ENCODE measurements at regions of chr19 and their contacts with region 1.

Region 1: GRCh38 chr19:38849860-38850435 is at the start of gene HNRNPL:
- DNase-seq: peak in 6 of 9 experiments; percentile 98 to 100 (median 99)
- ATAC-seq: peak; percentile 68
- H3K4me3 ChIP-seq: peak within 1 kb of the TSS; percentile 70 to 72
- H3K4me3 Mint-ChIP-seq: peak within 1 kb of the TSS; percentile 97
- H3K27ac ChIP-seq: peak within 1 kb of the TSS; percentile 85 to 97
- H3K27ac Mint-ChIP-seq: peak within 1 kb of the TSS; percentile 99
- H3K4me1 ChIP-seq: peaks cover 54% of the 10 kb centered on the region
- H3K4me1 Mint-ChIP-seq: peaks cover 52% of the 10 kb centered on the region
- H3K27me3 ChIP-seq: no peaks in the 10 kb centered on the region
- H3K27me3 Mint-ChIP-seq: no peaks in the 10 kb centered on the region
- CTCF ChIP-seq: peak; percentile 21
- total RNA-seq, gene HNRNPL: 615 to 625 TPM

Region 2: GRCh38 chr19:38618590-38619360 is 231.2 kb before region 1 on chr19 and contains the start of gene EIF3K:
- CTCF ChIA-PET with region 1: no interaction called
- POLR2A ChIA-PET with region 1: interaction called, 4 read pairs
- intact Hi-C with region 1: loop called in 1 of 2 experiments (anchors 1 kb)
- DNase-seq: peak; percentile 86 to 100 (median 97)
- ATAC-seq: peak; percentile 68
- H3K4me3 ChIP-seq: peak within 1 kb of the TSS; percentile 84 to 85
- H3K4me3 Mint-ChIP-seq: peak within 1 kb of the TSS; percentile 99
- H3K27ac ChIP-seq: peak within 1 kb of the TSS; percentile 89 to 96
- H3K27ac Mint-ChIP-seq: peak within 1 kb of the TSS; percentile 98
- H3K4me1 ChIP-seq: peaks cover 38% of the 10 kb centered on the region
- H3K4me1 Mint-ChIP-seq: peaks cover 49% of the 10 kb centered on the region
- H3K27me3 ChIP-seq: no peaks in the 10 kb centered on the region
- H3K27me3 Mint-ChIP-seq: no peaks in the 10 kb centered on the region
- CTCF ChIP-seq: no peak
- total RNA-seq, gene EIF3K: 313 to 315 TPM

Region 3: GRCh38 chr19:38665950-38666662 is 183.8 kb before region 1 on chr19:
- CTCF ChIA-PET with region 1: no interaction called
- POLR2A ChIA-PET with region 1: no interaction called
- intact Hi-C with region 1: no loop called
- DNase-seq: no peak
- ATAC-seq: no peak
- H3K4me3 ChIP-seq: no peak overlapping the region
- H3K4me3 Mint-ChIP-seq: no peak overlapping the region
- H3K27ac ChIP-seq: peak overlapping the region in 1 of 2 experiments; percentile 77
- H3K27ac Mint-ChIP-seq: no peak overlapping the region
- H3K4me1 ChIP-seq: peaks cover 78% of the 10 kb centered on the region
- H3K4me1 Mint-ChIP-seq: peaks cover 71% of the 10 kb centered on the region
- H3K27me3 ChIP-seq: peaks cover 0 to 7% of the 10 kb centered on the region in 2 experiments
- H3K27me3 Mint-ChIP-seq: peaks cover 21% of the 10 kb centered on the region
- CTCF ChIP-seq: no peak

Region 4: GRCh38 chr19:38831142-38831605 is 18.8 kb before region 1 on chr19:
- CTCF ChIA-PET with region 1: interaction called, 4 read pairs
- POLR2A ChIA-PET with region 1: interaction called, 27 read pairs
- intact Hi-C with region 1: loop called (anchors 1 kb)
- DNase-seq: peak in 1 of 9 experiments; percentile 63
- ATAC-seq: no peak
- H3K4me3 ChIP-seq: peak overlapping the region; percentile 74
- H3K4me3 Mint-ChIP-seq: peak overlapping the region; percentile 90
- H3K27ac ChIP-seq: peak overlapping the region; percentile 66 to 85
- H3K27ac Mint-ChIP-seq: peak overlapping the region; percentile 89
- H3K4me1 ChIP-seq: peaks cover 21% of the 10 kb centered on the region
- H3K4me1 Mint-ChIP-seq: peaks cover 37% of the 10 kb centered on the region
- H3K27me3 ChIP-seq: no peaks in the 10 kb centered on the region
- H3K27me3 Mint-ChIP-seq: no peaks in the 10 kb centered on the region
- CTCF ChIP-seq: no peak

Region 5: DNA sequence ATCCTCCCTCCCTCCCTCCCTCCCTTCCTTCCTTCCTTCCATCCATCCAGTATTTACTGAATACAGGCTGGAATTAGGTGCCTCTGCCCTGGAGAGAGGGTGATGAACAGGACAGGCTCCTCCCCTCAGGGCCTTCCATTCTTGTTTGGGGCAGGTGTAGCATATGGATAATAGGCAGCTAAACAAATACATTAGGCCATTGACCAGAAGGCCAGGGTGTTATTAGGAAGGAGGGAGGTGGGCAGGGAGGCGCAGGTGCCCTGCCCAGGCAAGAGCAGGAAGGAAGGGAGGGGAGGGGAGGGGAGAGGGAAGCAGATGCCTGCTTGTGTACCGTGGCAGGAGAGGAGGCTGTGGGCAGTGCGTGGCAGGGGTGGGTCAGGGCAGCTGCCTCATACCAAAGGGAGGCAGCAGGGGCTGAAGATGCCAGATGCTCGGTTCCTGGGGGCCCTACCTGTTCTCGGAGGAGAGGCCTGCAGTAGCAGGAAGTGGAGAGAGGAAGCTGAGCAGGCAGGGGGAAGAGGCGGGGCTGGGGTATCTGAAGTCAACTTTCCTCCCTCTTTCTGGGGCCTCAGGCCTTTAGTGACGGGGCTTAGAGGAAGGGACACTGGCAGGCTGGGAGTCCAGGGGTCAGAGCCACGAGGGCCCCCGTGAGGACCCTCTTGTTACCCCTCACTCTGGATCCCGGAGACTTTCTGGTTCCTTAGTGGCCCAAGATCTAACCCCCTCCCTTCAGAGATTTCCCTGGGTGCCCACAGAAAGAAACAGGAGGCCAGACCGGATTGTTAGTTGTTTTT is 28.0 kb after region 1 on chr19 and contains the start of gene RINL:
- CTCF ChIA-PET with region 1: interaction called, 4 read pairs
- POLR2A ChIA-PET with region 1: interaction called, 17 read pairs
- intact Hi-C with region 1: no loop called
- DNase-seq: peak in 8 of 9 experiments; percentile 63 to 85 (median 76)
- ATAC-seq: peak; percentile 94
- H3K4me3 ChIP-seq: peak within 1 kb of the TSS; percentile 52 to 65
- H3K4me3 Mint-ChIP-seq: peak within 1 kb of the TSS; percentile 87
- H3K27ac ChIP-seq: peak within 1 kb of the TSS; percentile 79 to 95
- H3K27ac Mint-ChIP-seq: peak within 1 kb of the TSS; percentile 97
- H3K4me1 ChIP-seq: peaks cover 36% of the 10 kb centered on the region
- H3K4me1 Mint-ChIP-seq: peaks cover 37% of the 10 kb centered on the region
- H3K27me3 ChIP-seq: no peaks in the 10 kb centered on the region
- H3K27me3 Mint-ChIP-seq: no peaks in the 10 kb centered on the region
- CTCF ChIP-seq: no peak
- total RNA-seq, gene RINL: 18.1 to 18.4 TPM

Region 6: GRCh38 chr19:39341719-39342604 is 492.0 kb after region 1 on chr19 and contains the start of gene SAMD4B:
- CTCF ChIA-PET with region 1: no interaction called
- POLR2A ChIA-PET with region 1: no interaction called
- intact Hi-C with region 1: loop called (anchors 1 to 5 kb)
- DNase-seq: peak; percentile 98 to 100 (median 99)
- ATAC-seq: peak; percentile 90
- H3K4me3 ChIP-seq: peak within 1 kb of the TSS; percentile 93 to 97
- H3K4me3 Mint-ChIP-seq: peak within 1 kb of the TSS; percentile 100
- H3K27ac ChIP-seq: peak within 1 kb of the TSS; percentile 67 to 88
- H3K27ac Mint-ChIP-seq: peak within 1 kb of the TSS; percentile 98
- H3K4me1 ChIP-seq: peaks cover 29% of the 10 kb centered on the region
- H3K4me1 Mint-ChIP-seq: peaks cover 69% of the 10 kb centered on the region
- H3K27me3 ChIP-seq: no peaks in the 10 kb centered on the region
- H3K27me3 Mint-ChIP-seq: no peaks in the 10 kb centered on the region
- CTCF ChIP-seq: peak; percentile 73
- total RNA-seq, gene SAMD4B: 68.3 to 78.1 TPM

Region 7: GRCh38 chr19:40055832-40056504 is 1206.0 kb after region 1 on chr19 and contains the start of gene ZNF780B:
- CTCF ChIA-PET with region 1: no interaction called
- POLR2A ChIA-PET with region 1: no interaction called
- intact Hi-C with region 1: no loop called
- DNase-seq: peak; percentile 29 to 82 (median 69)
- ATAC-seq: peak; percentile 90
- H3K4me3 ChIP-seq: peak within 1 kb of the TSS; percentile 72 to 83
- H3K4me3 Mint-ChIP-seq: peak within 1 kb of the TSS; percentile 100
- H3K27ac ChIP-seq: peak within 1 kb of the TSS; percentile 78
- H3K27ac Mint-ChIP-seq: peak within 1 kb of the TSS; percentile 99
- H3K4me1 ChIP-seq: peaks cover 21% of the 10 kb centered on the region
- H3K4me1 Mint-ChIP-seq: peaks cover 58% of the 10 kb centered on the region
- H3K27me3 ChIP-seq: no peaks in the 10 kb centered on the region
- H3K27me3 Mint-ChIP-seq: peaks cover 8% of the 10 kb centered on the region
- CTCF ChIP-seq: no peak
- total RNA-seq, gene ZNF780B: 9.8 to 14.8 TPM